AG04449 (cell line): ENCODE measurements at regions of chr6 and their contacts with region 1.

Region 1: GRCh38 chr6:99520855-99521632 is 5.8 kb upstream of the USP45 start:
- DNase-seq: peak; percentile 14
- H3K4me3 ChIP-seq: peak overlapping the region; percentile 90
- CTCF ChIP-seq: peak; percentile 94

Region 2: GRCh38 chr6:99536491-99536890 is 15.4 kb after region 1 on chr6:
- CTCF ChIA-PET with region 1: interaction called, 33 read pairs
- POLR2A ChIA-PET with region 1: no interaction called
- DNase-seq: no peak
- H3K4me3 ChIP-seq: no peak overlapping the region
- CTCF ChIP-seq: no peak

Region 3: GRCh38 chr6:99543968-99544367 is 22.9 kb after region 1 on chr6:
- CTCF ChIA-PET with region 1: interaction called, 17 read pairs
- POLR2A ChIA-PET with region 1: no interaction called
- DNase-seq: no peak
- H3K4me3 ChIP-seq: no peak overlapping the region
- CTCF ChIP-seq: no peak